Naive thymus-derived CD4-positive, alpha-beta T cell (primary cell): ENCODE measurements at regions of chr17 and their contacts with region 1.

Region 1: DNA sequence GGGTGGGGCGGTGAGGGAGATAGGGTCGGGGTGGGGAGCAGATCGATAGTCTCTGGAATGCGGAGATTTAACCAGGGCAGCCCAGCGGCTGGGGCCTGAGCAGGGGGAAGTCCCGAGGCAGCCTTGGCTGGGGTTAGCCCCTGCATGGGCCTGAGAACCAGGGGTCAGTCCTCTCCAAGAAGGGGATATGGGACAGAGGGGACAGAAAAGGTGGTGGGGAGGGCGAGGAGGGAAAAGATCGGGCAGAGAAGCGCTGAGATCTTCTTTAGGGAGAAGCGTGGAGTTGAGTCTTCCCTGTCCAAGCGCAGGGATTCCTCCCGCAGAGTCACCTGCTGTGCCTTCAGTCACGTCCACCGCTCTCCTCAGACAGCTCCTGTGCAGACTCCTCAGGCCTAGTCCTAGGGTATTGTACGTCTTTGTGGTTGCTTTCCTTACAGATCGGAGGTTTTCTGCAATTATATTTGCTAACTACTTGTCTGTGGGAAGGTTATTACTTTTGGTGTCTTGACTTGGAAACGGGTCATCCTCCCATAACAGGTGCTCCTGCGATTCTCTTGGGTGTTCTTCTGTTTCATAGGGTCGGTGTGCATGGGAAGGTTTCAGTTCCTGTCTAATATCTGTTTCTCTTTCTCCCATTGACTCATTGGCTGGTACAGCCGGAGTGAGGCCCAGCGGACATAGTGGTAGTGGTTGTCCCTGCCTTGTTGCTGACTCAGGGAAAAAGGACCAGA is 952 bp downstream of the CD300A start:
- DNase-seq: no peak
- ATAC-seq: peak; percentile 34
- H3K4me3 ChIP-seq: peak overlapping the region; percentile 37
- H3K4me3 Mint-ChIP-seq: peak overlapping the region in 2 of 10 donors; percentile 77 to 81
- H3K27ac ChIP-seq: no peak overlapping the region
- H3K27ac Mint-ChIP-seq: peak overlapping the region in 6 of 9 donors; percentile 55 to 90 (median 75)
- H3K4me1 ChIP-seq: peaks cover 47 to 67% of the 10 kb centered on the region in 2 donors
- H3K4me1 Mint-ChIP-seq: peaks cover 10 to 46% (median 28%) of the 10 kb centered on the region in 7 donors
- H3K27me3 ChIP-seq: no peaks in the 10 kb centered on the region
- H3K27me3 Mint-ChIP-seq: peaks cover 0 to 5% (median 0%) of the 10 kb centered on the region in 5 donors

Region 2: DNA sequence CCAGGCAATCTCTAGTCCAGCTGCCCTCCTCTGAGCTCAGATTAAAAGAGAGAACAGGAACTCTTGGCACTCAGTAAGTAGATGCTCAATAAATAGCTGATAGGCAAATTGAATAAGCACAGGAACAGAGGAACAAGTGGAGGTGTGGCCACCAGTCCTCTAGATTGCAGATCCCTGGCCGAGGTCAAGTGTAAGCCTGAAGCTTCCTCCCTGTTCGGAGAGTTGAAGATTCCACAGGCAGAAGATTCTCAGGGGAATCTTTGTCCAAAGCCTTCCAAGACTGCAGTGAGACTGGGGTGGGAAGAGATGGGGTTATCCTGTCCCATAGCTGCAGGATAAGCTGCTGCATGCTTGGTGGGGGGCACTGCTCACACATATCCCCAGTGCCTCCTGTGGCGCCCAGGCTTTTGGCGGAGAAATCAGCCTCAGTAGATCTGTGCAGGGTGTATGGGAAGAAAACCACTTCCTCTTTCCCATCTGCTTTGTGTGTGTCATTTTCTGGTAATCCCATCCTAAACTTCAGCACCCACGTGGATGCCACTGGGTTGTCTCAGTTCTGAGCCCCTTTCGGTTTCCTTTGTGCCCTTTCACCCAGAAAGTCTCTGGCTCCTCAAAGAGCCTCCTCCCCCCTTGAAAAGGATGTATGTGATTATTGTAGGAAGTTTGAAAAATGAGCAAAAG is 11.2 kb after region 1 on chr17:
- CTCF ChIA-PET with region 1: interaction called, 3 read pairs
- POLR2A ChIA-PET with region 1: interaction called, 4 read pairs
- intact Hi-C with region 1: loop called in 1 of 2 experiments (anchors 1 kb)
- DNase-seq: peak in 5 of 9 donors; percentile 16 to 58 (median 52)
- ATAC-seq: peak; percentile 79
- H3K4me3 ChIP-seq: peak overlapping the region; percentile 25
- H3K4me3 Mint-ChIP-seq: peak overlapping the region; percentile 20 to 79 (median 64)
- H3K27ac ChIP-seq: peak overlapping the region; percentile 3
- H3K27ac Mint-ChIP-seq: peak overlapping the region; percentile 66 to 92 (median 79)
- H3K4me1 ChIP-seq: peaks cover 42 to 57% of the 10 kb centered on the region in 2 donors
- H3K4me1 Mint-ChIP-seq: peaks cover 34 to 75% (median 56%) of the 10 kb centered on the region in 7 donors
- H3K27me3 ChIP-seq: no peaks in the 10 kb centered on the region
- H3K27me3 Mint-ChIP-seq: no peaks in the 10 kb centered on the region